Aorta (tissue), 5 donors: ENCODE measurements at regions of chr12 and their contacts with region 1.

Region 1: GRCh38 chr12:106955377-106956047 is at the start of gene TMEM263:
- DNase-seq: peak; percentile 96 to 99
- ATAC-seq: peak; percentile 96
- H3K4me3 ChIP-seq: peak within 1 kb of the TSS; percentile 74 to 95
- H3K27ac ChIP-seq: peak within 1 kb of the TSS; percentile 72 to 89
- H3K4me1 ChIP-seq: peaks cover 0 to 2% of the 10 kb centered on the region in 2 donors
- H3K27me3 ChIP-seq: no peaks in the 10 kb centered on the region
- total RNA-seq, gene TMEM263: 55.5 to 78.9 TPM

Region 2: DNA sequence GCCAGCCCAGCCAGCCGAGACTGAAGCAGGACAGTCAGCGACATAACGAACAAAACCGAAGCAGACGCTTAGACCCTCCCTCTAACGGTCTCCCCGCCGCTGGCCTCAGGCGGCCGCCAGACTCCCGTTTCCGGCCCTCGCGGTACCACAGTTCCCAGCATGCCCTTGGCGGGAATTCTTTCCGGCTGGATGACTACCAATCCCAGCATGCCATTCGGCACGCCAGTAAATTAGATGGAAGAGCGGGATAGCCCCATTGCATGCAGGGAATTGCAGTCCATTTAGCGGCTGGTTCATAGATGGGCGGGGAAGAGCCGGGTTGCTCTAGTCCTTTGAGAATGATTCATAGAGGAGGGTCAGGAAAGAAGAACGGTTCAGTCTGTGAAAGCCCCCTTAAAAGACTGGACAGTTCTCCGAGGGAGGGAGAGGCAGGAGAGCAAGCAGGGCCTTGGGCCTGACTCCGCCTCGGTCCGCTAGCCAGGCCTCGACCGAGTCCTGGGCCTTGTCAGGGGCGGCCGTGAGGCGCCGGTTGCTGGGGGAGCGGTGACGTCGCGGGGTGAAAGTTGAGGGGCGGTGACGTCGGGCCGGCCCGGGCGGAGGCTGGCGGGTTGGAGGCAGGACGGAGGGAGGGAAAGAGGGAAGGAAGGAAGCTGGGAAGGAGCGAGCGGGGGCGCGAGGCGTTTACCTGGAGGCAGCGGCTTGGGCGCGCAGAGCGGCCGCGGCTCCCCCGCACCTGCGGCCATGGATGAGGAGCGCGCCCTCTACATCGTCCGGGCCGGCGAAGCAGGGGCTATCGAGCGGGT is 181.3 kb before region 1 on chr12 and contains the start of gene RIC8B:
- intact Hi-C with region 1: loop called in 1 of 2 experiments (anchors 2 kb)
- DNase-seq: peak; percentile 96 to 99
- ATAC-seq: peak; percentile 98
- H3K4me3 ChIP-seq: peak within 1 kb of the TSS; percentile 73 to 84
- H3K27ac ChIP-seq: peak within 1 kb of the TSS in 1 of 2 donors; percentile 97
- H3K4me1 ChIP-seq: peaks cover 0 to 5% of the 10 kb centered on the region in 2 donors
- H3K27me3 ChIP-seq: no peaks in the 10 kb centered on the region
- total RNA-seq, gene RIC8B: 18.1 to 21.4 TPM

Region 3: GRCh38 chr12:106883426-106883825 is 72.1 kb before region 1 on chr12:
- intact Hi-C with region 1: no loop called
- DNase-seq: no peak
- ATAC-seq: no peak
- H3K4me3 ChIP-seq: no peak overlapping the region
- H3K27ac ChIP-seq: no peak overlapping the region
- H3K4me1 ChIP-seq: no peaks in the 10 kb centered on the region
- H3K27me3 ChIP-seq: no peaks in the 10 kb centered on the region

Region 4: DNA sequence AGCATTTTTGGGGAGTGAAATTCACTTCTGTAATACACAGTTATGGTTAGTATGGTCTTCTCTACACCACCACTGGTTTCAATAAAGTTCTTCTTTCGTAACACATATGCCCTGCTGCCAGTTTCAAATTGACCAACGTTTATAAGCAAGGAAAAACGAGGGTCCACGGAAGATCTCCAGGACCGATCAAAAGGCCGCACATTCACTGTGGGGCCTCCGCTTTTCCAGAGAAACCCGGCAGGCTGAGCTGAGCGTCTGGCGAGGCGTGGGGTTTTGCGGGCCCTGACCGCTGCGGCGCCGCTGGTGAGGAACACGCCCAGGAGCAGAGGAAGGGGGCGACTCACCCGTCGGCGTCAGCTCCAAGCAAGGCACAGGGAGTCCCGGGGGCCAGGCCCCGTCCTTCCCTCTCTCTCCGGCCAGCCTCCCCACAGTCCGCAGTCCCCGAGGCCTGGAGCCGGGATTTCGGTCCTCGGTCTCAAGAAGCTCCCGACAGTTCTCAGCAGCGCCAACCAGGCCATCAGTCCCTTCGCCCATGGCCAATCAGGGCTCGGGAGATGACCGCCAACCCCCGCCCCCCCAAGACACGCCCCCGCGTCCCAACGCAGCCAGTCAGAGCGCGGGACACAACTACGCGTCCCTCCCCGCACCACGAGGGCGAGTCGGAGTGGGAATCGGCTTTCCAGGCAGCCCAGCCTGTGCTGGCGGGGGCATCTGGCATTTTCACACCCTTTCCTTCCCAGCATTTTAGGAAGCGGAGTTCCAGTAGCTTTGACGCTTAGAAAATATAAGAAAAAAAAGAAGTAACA is 31.3 kb after region 1 on chr12 and contains the start of gene MTERF2:
- intact Hi-C with region 1: loop called in 1 of 2 experiments (anchors 1 kb)
- DNase-seq: peak; percentile 95 to 96
- ATAC-seq: peak; percentile 99
- H3K4me3 ChIP-seq: peak within 1 kb of the TSS; percentile 57 to 74
- H3K27ac ChIP-seq: peak within 1 kb of the TSS; percentile 36 to 97
- H3K4me1 ChIP-seq: peaks cover 0 to 2% of the 10 kb centered on the region in 2 donors
- H3K27me3 ChIP-seq: no peaks in the 10 kb centered on the region
- total RNA-seq, gene MTERF2: 8.5 to 11.0 TPM